ENCODE measurements at regions of chr6 and their contacts with region 1.

Region 1: GRCh38 chr6:118283766-118284165 is 264.3 kb upstream of the PLN start:
- DNase-seq: peak; percentile 39 to 62 (median 44)
- ATAC-seq: peak; percentile 88
- H3K4me3 ChIP-seq: no peak overlapping the region
- H3K27ac ChIP-seq: no peak overlapping the region
- H3K4me1 ChIP-seq: no peaks in the 10 kb centered on the region
- H3K27me3 ChIP-seq: peaks cover 4 to 8% of the 10 kb centered on the region in 2 experiments; a peak in 3 of 5 replicates
- CTCF ChIP-seq: peak; percentile 45 to 76 (median 67); a peak in 5 of 6 replicates
- EP300 ChIP-seq: no peak
- POLR2A ChIP-seq: no peak
- RAD21 ChIP-seq: peak; percentile 79 to 82

Region 2: DNA sequence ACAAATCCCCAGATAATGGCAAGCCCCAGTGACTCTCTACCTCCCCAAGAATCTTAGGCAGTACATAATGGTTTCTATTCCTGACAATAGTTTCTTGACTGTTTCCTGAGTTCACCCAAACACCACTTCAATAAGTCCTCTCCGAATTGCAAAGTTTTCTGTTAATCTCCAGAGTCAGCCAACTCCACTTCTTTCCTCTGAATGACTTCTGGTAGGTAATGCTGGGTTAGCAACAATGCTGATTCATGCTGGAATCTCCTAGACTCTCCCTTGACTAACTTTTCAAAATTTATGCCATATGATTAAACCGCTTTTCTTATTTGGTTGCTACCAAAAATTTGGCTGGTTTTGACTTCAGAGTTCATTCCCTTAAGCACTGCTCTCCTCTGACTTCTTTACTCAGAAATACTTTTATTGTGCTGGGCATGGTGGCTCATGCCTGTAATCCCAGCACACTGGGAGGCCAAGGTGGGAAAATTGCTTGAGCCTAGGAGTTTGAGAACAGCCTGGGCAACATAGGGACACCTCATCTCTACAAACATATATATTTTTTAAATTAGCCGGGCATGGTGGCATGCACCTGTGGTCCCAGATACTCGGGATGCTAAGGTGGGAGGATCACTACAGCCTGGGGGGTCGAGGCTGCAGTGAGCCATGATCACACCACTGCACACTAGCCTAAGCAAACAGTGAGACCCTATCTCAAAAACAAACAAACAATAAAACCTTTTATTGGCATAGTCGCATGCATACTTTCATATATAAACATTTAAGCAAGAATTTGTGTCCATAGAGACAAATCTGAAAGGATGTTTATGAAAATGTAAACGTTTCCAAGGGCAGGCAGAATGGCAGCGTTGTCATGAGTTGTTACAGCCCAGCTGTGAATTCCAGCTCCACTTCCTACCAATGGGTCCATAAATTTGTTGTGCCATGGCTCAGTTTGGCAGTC is 15.0 kb after region 1 on chr6:
- CTCF ChIA-PET with region 1: no interaction called
- POLR2A ChIA-PET with region 1: no interaction called
- in situ Hi-C with region 1: no loop called
- intact Hi-C with region 1: no loop called
- DNase-seq: no peak
- ATAC-seq: no peak
- H3K4me3 ChIP-seq: no peak overlapping the region
- H3K27ac ChIP-seq: no peak overlapping the region
- H3K4me1 ChIP-seq: no peaks in the 10 kb centered on the region
- H3K27me3 ChIP-seq: no peaks in the 10 kb centered on the region
- CTCF ChIP-seq: no peak
- EP300 ChIP-seq: no peak
- POLR2A ChIP-seq: no peak
- RAD21 ChIP-seq: no peak

Region 3: DNA sequence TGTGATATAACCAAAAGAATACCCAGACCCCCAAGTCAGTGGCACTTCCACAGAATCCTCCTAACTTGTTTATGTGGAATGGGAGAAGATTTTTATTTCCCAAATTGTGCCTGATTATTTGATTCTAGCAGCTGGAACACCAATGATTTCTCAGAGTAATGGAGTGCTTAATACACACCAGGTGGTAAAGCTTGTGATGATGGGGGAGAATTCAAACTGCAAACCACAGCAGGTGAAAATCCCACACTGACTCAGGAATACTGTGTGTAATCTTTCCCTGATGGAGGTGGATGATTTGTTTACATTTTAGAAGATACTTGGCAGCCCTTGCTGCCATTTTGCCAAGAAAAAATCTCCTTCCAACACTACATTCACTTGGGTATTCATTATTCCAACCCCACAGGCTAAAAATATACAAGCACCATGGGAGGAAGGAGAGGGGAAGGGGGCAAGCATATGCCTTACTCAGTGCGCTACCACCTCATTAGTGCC is 51.6 kb after region 1 on chr6:
- CTCF ChIA-PET with region 1: no interaction called
- POLR2A ChIA-PET with region 1: no interaction called
- in situ Hi-C with region 1: no loop called
- intact Hi-C with region 1: no loop called
- DNase-seq: no peak
- ATAC-seq: no peak
- H3K4me3 ChIP-seq: no peak overlapping the region
- H3K27ac ChIP-seq: no peak overlapping the region
- H3K4me1 ChIP-seq: no peaks in the 10 kb centered on the region
- H3K27me3 ChIP-seq: no peaks in the 10 kb centered on the region
- CTCF ChIP-seq: no peak
- EP300 ChIP-seq: no peak
- POLR2A ChIP-seq: no peak
- RAD21 ChIP-seq: no peak

Region 4: DNA sequence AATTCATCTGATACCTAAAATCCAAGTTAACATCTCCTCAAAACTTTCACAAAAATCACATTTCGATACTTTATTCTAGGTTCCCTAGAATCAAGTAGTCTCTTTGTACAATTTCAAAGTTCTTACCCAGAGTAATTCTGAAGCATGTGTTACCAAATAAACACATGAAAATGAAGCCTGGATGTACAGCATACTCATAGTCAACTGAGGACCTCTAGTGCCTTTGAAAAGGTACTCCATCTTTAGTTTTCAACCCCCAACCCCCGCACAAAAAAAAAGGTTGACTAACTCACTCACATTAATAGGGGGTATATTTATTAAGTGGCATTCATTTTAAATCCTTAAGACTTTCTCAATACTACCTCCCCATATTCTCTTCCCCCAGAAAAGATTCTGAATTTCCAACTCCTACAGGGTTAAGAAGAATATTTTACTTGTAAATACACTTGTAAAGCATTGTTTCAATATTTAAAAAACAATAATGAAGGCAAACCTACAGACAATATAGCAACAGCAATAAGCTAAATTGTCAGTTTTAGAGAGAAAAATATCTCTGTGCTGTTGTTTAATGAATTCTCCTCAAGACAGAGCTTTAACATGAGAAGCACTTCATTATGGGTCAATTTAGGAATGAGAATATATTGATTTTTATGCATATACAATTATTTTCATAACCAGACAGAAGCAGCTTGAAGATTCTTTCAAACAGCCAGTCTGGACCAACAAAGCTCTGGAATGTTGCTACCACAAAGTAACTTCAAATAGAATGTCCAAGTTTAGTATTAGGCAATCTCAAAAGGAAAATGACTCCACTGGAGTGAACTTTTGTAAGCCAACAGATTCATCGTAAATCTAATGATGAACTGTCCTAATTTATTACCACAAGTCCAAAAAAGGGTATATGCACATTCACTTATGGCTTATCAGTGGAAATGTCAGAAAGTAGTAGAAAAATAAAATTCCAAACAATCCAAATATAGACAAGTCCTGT is 267.6 kb after region 1 on chr6:
- CTCF ChIA-PET with region 1: interaction called, 25 read pairs
- POLR2A ChIA-PET with region 1: no interaction called
- in situ Hi-C with region 1: loop called (anchors 10 kb)
- intact Hi-C with region 1: loop called (anchors 1 kb)
- DNase-seq: peak; percentile 34 to 59 (median 42)
- ATAC-seq: peak; percentile 94
- H3K4me3 ChIP-seq: no peak overlapping the region
- H3K27ac ChIP-seq: no peak overlapping the region
- H3K4me1 ChIP-seq: no peaks in the 10 kb centered on the region; a peak in 1 of 5 replicates
- H3K27me3 ChIP-seq: no peaks in the 10 kb centered on the region
- CTCF ChIP-seq: peak; percentile 55 to 75 (median 63); a peak in 5 of 6 replicates
- EP300 ChIP-seq: no peak
- POLR2A ChIP-seq: no peak
- RAD21 ChIP-seq: peak; percentile 82 to 83

Region 5: DNA sequence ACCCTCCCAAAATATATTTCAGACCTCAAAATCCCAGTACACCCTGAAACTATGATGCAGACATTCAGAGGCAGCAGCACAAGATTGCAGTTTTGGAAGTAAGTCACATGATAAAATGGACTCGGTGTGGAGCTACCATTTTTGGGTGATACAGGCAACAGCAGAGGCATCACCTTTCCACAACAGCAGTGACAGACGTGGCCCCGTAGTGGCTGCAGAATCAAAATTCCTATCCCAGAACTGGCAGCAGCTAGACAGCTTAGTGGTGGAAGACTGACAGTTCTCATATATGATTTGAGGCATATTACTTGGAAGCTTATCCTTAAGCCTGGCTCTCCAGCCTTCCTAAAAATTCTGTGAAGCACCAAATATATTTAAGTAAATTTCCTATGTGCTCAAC is 284.2 kb after region 1 on chr6:
- CTCF ChIA-PET with region 1: no interaction called
- POLR2A ChIA-PET with region 1: no interaction called
- in situ Hi-C with region 1: no loop called
- intact Hi-C with region 1: no loop called
- DNase-seq: no peak
- ATAC-seq: no peak; the same call in 2 of the 3 replicates
- H3K4me3 ChIP-seq: no peak overlapping the region
- H3K27ac ChIP-seq: no peak overlapping the region
- H3K4me1 ChIP-seq: no peaks in the 10 kb centered on the region; a peak in 1 of 5 replicates
- H3K27me3 ChIP-seq: no peaks in the 10 kb centered on the region
- CTCF ChIP-seq: no peak
- EP300 ChIP-seq: no peak
- POLR2A ChIP-seq: no peak
- RAD21 ChIP-seq: no peak

Region 6: DNA sequence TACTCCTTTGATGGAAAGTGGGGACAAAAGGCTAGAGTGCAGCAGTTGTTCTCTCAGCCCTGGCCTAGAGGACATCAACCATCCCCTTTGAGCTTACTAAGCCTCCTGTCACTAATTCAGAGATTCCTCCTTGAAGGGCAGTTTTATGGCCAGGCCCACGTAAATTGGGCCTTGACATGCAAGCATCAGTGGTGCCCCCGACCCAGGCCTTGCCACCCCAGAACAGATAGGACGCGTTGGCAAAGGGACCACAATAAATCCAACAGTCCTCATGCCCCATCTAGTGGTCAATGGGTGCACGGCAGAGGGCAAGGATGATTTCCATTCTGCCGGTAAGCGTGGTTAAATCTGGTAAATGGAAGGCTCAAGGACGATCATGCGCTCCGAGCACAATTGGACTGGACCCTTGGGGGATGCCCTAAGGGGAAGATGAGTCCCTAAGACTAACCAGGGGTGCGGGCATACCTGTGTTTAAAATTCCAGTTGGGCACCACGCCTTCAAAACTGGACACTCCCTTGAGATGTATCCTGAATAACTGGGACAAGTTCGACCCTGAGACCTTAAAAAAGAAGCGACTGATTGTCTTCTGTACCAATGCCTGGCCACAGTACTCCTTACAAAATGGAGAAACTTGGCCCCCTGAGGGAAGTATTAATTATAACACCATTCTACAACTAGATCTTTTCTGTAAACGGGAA is 335.1 kb after region 1 on chr6:
- CTCF ChIA-PET with region 1: interaction called, 6 read pairs
- POLR2A ChIA-PET with region 1: no interaction called
- in situ Hi-C with region 1: loop called (anchors 10 kb)
- intact Hi-C with region 1: loop called (anchors 1 kb)
- DNase-seq: peak; percentile 32 to 59 (median 39)
- ATAC-seq: peak; percentile 90
- H3K4me3 ChIP-seq: no peak overlapping the region
- H3K27ac ChIP-seq: no peak overlapping the region
- H3K4me1 ChIP-seq: peaks cover 0 to 7% of the 10 kb centered on the region in 2 experiments; a peak in 3 of 5 replicates
- H3K27me3 ChIP-seq: no peaks in the 10 kb centered on the region
- CTCF ChIP-seq: peak; percentile 80 to 92 (median 80)
- EP300 ChIP-seq: no peak
- POLR2A ChIP-seq: no peak
- RAD21 ChIP-seq: peak; percentile 75 to 82

Region 7: GRCh38 chr6:118800394-118801071 is 516.8 kb after region 1 on chr6:
- CTCF ChIA-PET with region 1: interaction called, 14 read pairs
- POLR2A ChIA-PET with region 1: no interaction called
- in situ Hi-C with region 1: loop called (anchors 5 kb)
- intact Hi-C with region 1: loop called (anchors 2 kb)
- DNase-seq: peak; percentile 77 to 89 (median 80)
- ATAC-seq: peak; percentile 96
- H3K4me3 ChIP-seq: no peak overlapping the region
- H3K27ac ChIP-seq: no peak overlapping the region
- H3K4me1 ChIP-seq: peaks cover 0 to 3% of the 10 kb centered on the region in 2 experiments; a peak in 3 of 5 replicates
- H3K27me3 ChIP-seq: no peaks in the 10 kb centered on the region
- CTCF ChIP-seq: peak; percentile 74 to 92 (median 83)
- EP300 ChIP-seq: no peak
- POLR2A ChIP-seq: no peak
- RAD21 ChIP-seq: peak; percentile 74 to 88

Region 8: DNA sequence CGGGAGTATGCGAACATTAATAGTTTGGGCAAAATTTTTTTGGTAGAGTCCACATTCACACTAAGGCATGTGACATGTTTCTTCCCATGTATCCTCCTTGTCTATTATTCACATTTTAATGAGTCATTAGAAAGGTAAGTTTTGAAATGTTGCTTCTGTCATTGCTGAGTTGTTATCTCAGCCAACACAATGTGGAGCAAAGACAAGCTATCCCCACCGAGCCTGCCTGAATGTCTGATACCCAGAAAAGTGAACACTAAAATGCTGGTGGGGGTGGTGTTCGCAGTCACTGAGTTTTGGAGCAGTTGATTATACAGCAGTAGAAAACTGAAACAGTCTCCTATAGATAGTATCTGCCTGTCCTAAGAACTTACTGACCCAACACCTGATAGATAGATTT is 541.9 kb after region 1 on chr6:
- CTCF ChIA-PET with region 1: no interaction called
- POLR2A ChIA-PET with region 1: no interaction called
- in situ Hi-C with region 1: no loop called
- intact Hi-C with region 1: no loop called
- DNase-seq: peak in 3 of 4 experiments; percentile 20 to 72 (median 46)
- ATAC-seq: peak; percentile 90
- H3K4me3 ChIP-seq: no peak overlapping the region
- H3K27ac ChIP-seq: no peak overlapping the region; the same call in 1 of the 3 replicates
- H3K4me1 ChIP-seq: peaks cover 0 to 8% of the 10 kb centered on the region in 2 experiments; a peak in 2 of 5 replicates
- H3K27me3 ChIP-seq: no peaks in the 10 kb centered on the region
- CTCF ChIP-seq: no peak
- EP300 ChIP-seq: no peak; the same call in 1 of the 2 replicates
- POLR2A ChIP-seq: no peak
- RAD21 ChIP-seq: no peak

Region 9: DNA sequence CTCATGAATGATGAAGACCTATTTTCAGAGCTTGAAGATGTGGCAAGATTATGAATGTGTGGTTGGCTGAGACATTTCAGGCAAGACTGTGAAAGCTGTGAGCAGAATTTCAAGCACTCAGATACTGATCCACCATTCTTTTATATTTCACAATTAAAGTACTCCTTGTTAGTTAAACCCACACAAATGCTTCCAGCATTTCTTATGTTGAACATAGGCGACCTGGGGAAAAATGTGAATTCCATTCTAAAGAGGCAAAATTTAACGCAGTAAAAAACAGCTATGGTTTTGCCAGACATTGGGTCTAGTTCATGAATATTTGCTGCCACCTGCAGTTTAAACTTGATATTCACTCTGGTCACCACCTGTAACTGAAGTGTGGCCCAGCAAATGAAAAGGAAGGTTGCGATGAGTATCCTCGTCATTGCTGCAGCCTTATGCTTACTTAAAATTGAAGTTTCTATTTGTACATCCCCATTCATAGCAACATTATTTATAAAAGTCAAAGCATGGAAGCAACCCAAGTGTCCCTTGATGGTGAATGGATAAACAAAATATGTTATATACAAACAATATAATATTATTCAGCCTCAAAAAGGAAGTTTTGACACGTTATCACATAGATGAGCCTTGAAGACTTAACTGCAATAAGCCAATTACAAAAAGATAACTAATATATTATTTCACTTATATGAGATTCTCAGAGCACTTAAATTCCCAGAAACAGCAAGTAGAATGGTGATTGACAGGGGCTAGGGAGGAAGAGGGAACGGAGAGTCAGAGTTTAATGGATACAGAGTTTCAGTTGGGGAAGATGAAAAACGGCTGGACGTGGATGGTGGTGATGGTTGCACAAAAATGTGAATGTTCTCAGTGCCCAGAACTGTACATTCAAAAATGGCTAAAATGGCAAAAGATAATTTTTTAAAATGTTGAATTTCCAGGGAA is 827.1 kb after region 1 on chr6:
- CTCF ChIA-PET with region 1: interaction called, 3 read pairs
- POLR2A ChIA-PET with region 1: no interaction called
- in situ Hi-C with region 1: loop called (anchors 10 kb)
- intact Hi-C with region 1: loop called (anchors 5 kb)
- DNase-seq: peak; percentile 58 to 79 (median 64)
- ATAC-seq: peak; percentile 92
- H3K4me3 ChIP-seq: no peak overlapping the region
- H3K27ac ChIP-seq: no peak overlapping the region
- H3K4me1 ChIP-seq: peaks cover 3 to 16% of the 10 kb centered on the region in 2 experiments; a peak in 3 of 5 replicates
- H3K27me3 ChIP-seq: no peaks in the 10 kb centered on the region
- CTCF ChIP-seq: peak; percentile 68 to 86 (median 72)
- EP300 ChIP-seq: no peak
- POLR2A ChIP-seq: no peak
- RAD21 ChIP-seq: peak; percentile 97 to 98

Measured in K562 (cell line).